Right ventricle myocardium inferior (tissue), 1 donor: ENCODE measurements at regions of chr1 and their contacts with region 1.

Region 1: DNA sequence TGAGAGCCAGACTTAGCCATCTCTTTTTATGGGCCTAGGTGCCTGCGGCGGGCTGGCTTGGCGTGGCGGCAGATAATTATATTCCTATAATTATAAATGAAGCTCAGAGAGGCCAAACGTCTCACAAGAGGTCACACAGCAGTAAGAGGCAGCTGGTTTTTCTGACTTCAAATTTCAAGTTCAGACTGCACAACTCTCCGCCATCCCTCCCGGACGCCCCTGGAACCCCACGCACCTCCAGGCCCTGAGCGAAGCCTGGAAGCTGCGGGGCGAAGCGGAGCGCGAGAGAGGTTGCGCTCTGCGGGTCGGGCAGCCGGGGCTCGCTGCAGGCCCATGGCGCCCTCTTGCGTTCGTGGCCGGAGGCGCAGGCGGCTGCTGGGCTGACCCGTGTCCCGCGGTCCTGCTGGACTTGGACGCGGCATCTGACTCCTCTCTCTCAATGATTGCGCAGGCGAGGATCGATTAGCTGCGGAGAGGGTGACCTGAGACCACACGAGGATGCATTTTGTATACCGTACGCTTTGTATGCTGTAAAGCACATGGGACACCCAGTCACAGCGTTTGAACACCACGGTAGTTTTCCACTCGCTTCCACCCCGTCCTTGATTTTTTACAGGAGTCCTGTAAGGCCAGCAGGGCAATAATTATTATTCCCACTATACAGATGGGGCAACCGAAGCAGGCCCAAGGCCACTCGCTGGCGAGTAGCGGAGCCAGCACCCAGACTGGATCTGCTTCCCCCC is 272.7 kb downstream of the FOXD2 start:
- DNase-seq: peak; percentile 87
- ATAC-seq: peak; percentile 88

Region 2: DNA sequence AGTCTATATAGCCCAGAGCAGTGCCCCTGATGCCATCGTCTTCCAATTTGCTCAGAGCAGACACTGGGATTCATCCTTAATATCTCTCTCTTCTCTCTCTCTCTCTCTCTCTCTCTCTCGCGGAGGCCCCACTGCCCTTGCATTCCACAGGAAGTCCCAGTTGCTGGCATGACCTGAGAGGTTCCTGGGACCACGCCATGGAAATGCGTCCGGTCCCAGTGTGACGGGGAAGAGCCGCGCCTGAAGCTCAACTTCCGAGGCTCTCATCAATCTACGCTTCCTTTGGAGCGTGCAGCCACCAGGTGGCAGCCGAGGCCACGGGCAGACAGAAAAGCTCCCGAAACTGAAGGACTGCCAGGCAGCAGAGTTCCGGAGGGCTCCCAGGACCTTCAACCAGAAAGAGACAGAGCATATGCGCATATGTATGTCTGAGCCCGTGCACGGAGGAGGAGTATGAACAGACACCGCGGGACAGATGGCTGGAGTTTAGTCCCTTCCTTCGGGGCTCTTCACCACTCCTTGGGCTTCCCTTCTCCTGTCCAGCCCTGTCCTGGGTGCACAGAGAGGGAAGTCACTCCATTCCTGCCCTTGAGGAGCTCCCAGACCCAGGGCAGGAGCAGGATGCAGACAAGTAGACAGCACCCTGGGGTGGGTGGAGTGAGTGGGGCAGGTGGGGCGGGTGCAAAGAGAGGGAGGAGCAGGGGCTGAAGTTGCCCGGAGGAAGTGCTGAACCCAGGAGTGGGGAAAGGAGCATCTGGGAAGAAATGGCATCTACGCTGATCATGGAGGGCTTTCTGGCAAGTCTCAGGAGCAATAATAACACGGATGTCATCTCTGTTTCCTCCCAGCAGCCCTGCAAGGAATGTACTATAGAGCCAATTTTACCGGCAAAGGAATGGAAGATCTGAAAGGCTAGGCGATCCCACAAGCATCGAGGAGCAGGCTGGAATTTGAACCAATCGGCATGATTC is 531.2 kb before region 1 on chr1:
- intact Hi-C with region 1: loop called (anchors 5 kb)
- DNase-seq: peak; percentile 92
- ATAC-seq: peak; percentile 89

Region 3: DNA sequence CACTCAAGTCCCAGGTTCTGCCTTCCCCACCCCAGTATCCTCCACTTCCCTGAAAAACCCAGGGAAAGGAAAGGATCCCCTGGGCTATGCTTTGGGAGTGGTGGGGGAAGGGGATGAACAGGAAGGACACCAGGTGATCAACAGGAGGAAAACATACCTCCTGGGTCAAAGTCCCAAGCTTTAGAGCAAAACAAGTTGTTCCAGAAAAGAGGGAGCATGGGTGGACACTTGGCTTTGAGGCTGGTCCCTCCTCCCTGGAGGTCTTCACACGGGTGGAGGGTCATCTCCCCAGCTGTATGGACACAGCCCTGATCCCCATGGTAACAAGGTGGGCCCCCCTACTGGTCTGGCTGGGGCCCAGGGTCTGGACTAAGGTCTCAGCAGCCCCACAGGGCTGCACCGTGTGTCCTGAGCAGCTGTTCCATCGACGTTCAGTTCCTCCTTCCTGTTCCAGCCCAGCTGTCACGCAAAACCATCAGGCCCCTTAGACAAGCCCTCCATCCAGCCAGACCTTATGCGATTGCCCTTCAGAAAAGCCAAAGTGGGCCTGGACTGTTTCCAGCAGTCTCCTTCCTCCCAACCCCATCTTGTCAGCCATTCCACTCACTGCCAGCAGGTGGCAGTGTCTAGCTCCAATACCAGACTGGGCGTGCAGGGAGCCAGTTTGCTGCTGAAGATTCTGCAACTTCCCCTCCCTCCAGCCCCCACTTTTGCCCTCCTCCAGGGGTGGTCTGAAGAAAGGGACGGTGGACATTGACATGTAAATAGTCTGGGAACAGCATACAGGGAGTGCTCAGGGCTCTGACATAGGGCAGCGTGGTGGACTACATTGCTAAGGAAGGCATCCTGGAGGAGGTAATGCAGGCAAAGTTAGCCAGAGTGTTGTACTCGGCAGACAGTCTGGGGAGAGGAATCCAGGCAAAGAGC is 517.8 kb before region 1 on chr1:
- intact Hi-C with region 1: loop called (anchors 5 kb)
- DNase-seq: peak; percentile 85
- ATAC-seq: peak; percentile 38

Region 4: GRCh38 chr1:47388891-47389238 is 321.6 kb before region 1 on chr1:
- intact Hi-C with region 1: loop called (anchors 5 kb)
- DNase-seq: no peak
- ATAC-seq: peak; percentile 66

Region 5: DNA sequence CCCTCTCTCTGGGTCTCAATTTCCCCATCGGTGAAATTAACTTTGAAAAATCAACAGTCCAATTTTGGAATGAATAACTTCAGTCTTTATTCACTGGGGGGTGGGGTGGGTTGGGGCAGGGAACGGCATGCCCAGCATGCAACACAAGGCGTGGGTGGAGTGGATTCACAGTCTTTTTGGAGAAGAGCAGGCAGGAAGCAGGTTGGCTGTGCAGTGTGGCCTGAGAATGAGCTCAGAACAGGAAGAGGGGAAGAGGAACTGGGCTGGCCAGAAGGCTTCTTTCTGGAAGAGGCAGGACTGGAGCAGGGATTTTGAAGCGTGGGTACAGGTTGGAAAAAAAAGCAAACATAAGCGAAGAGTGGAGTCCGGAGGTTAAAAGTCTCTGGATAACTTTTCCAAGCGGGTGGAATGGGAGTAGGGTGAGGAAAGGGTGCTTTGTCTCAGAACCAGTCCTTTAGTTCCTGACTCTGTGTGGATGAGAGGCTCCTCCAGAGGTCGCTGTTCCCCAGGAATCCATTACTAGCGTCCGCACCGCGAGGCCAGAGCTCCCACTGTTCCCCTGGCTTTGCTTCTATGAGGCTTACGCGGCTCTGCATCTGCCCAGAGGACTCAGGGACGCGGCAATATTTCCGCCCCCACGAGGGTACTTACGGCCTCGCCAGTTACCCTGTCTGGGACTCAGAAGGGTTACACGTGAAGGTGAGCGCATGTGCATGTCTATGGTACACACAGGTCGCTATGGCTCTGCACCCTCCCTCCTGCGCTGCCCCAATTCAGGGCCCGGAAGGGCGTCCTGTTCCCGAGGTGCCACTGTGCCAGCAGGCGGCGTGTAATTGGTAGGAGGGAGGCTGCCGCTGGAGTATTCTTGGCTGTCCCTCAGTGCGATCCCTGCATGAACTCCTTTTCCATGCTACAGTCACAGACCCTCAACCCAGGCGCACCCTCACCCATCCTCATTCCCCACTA is 278.1 kb before region 1 on chr1:
- intact Hi-C with region 1: loop called (anchors 2 kb)
- DNase-seq: no peak
- ATAC-seq: peak; percentile 78

Region 6: DNA sequence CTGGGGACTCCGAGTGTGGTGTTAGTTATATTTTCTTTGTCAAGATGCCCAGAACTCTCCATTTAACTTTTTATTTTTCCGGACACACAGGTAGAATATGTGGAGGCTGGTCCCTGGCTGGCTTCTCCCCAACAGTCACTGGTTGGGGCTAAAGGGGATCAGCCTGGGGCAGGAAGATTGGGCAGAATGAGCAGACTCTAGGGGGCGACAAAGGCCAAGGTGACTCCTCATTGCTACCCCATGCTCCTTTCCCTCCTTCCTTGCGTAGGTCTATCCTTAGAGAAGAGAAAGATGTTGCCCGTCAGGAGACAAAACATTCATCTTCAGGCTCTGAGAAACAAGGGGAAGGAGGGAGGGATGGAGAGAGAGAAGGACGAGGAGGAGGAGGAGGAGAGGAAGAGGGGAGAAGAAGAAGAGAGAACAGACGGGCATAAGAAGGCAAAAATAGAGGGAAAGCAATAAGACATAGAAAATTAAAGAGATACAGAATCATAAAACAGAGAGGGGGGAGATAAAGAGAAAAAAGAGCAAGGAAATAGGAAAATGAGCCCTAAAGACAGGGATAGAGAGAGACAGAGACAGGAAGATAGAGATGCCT is 182.7 kb before region 1 on chr1:
- intact Hi-C with region 1: loop called (anchors 2 kb)
- DNase-seq: no peak
- ATAC-seq: no peak

Region 7: DNA sequence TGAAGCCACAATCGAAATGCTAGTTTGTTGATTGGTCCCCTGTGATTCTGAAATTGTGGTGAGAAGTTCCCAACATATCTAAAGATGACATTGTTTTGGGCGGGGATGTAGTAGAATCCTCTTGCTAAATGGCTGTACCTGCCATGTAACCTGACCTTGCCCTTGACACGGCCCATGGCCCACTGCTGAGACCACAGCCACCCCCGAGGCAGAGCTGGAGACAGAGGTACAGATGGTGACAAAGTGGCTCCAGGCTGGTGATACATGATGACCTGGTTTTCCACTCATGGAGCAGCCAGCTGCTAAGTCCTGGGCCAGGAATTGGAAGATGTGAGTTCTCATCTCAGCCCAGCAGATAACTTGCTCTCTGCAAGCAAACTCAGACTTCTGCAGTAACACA is 46.1 kb before region 1 on chr1:
- intact Hi-C with region 1: no loop called
- DNase-seq: no peak
- ATAC-seq: no peak